CD4-positive, alpha-beta memory T cell (primary cell): ENCODE measurements at regions of chr3 and their contacts with region 1.

Region 1: DNA sequence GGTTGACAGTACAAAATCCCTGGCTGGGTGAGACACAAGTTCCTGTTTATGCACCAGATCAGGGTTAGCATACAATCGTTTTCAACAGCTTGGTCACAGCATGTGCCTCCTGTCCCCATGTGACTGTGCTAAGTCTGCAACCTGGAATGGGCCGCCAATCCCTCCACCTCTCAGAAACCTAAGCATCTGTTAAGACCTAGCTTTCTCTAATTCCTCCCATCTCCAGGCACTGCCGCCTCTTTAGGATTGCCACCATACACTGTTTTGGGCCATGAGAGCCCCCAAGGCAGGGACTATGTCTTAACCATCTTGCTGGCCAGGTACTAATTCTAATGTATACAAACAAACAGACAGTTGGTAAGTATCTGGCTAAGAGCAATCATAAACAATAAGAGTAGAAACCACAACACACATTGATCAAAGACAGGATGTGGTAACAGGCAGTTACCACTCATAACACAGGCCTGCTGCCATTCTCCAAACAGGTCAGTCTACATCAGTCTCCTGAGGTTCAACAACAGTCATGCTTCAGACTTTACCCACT is 25.6 kb downstream of the SEC22C start:
- DNase-seq: peak; percentile 78 to 86 (median 81)
- H3K4me3 ChIP-seq: peak overlapping the region; percentile 15 to 17
- H3K4me3 Mint-ChIP-seq: peak overlapping the region; percentile 46 to 88 (median 80)
- H3K27ac ChIP-seq: peak overlapping the region; percentile 41
- H3K27ac Mint-ChIP-seq: peak overlapping the region; percentile 91 to 99 (median 98)
- H3K4me1 ChIP-seq: peaks cover 44% of the 10 kb centered on the region
- H3K4me1 Mint-ChIP-seq: peaks cover 31 to 52% (median 43%) of the 10 kb centered on the region in 4 donors
- H3K27me3 ChIP-seq: no peaks in the 10 kb centered on the region
- H3K27me3 Mint-ChIP-seq: no peaks in the 10 kb centered on the region

Region 2: GRCh38 chr3:42052484-42053351 is 503.4 kb before region 1 on chr3:
- CTCF ChIA-PET with region 1: no interaction called
- POLR2A ChIA-PET with region 1: no interaction called
- intact Hi-C with region 1: no loop called
- DNase-seq: no peak
- H3K4me3 ChIP-seq: no peak overlapping the region
- H3K4me3 Mint-ChIP-seq: no peak overlapping the region
- H3K27ac ChIP-seq: no peak overlapping the region
- H3K27ac Mint-ChIP-seq: peak overlapping the region in 1 of 7 donors; percentile 15
- H3K4me1 ChIP-seq: peaks cover 12% of the 10 kb centered on the region
- H3K4me1 Mint-ChIP-seq: peaks cover 12 to 43% (median 28%) of the 10 kb centered on the region in 4 donors
- H3K27me3 ChIP-seq: no peaks in the 10 kb centered on the region
- H3K27me3 Mint-ChIP-seq: no peaks in the 10 kb centered on the region

Region 3: GRCh38 chr3:42118762-42119361 is 437.3 kb before region 1 on chr3:
- CTCF ChIA-PET with region 1: no interaction called
- POLR2A ChIA-PET with region 1: no interaction called
- intact Hi-C with region 1: loop called (anchors 5 kb)
- DNase-seq: no peak
- H3K4me3 ChIP-seq: no peak overlapping the region
- H3K4me3 Mint-ChIP-seq: no peak overlapping the region
- H3K27ac ChIP-seq: no peak overlapping the region
- H3K27ac Mint-ChIP-seq: peak overlapping the region in 3 of 7 donors; percentile 37 to 61 (median 43)
- H3K4me1 ChIP-seq: no peaks in the 10 kb centered on the region
- H3K4me1 Mint-ChIP-seq: peaks cover 13 to 17% (median 16%) of the 10 kb centered on the region in 4 donors
- H3K27me3 ChIP-seq: no peaks in the 10 kb centered on the region
- H3K27me3 Mint-ChIP-seq: no peaks in the 10 kb centered on the region

Region 4: DNA sequence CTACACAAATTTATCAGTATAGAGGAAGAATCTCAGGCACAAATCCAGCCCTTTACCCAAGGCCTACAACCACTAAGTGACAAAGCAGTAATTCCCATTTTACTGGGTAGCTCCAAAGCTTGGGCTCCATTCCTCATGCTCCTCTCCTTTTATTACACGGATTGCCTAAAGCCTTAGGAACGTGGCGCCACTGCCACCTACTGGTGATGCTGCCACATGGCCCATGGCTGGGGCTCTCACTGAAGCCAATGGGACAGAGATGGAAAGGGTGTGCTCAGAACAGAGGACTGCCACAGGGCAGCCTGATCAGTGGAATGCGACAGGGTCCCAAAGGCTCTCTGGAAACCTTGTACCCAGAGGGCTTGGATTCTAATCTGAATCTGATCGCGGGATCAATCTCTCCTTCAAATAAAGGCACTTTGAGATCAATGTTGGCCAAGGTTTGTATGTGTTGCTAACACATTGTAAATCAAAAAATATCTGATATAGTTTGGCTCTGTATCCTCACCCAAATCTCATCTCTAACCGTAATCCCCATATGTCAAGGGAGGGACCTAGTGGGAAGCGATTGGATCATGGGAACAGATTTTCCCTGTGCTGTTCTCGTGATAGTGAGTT is 112.2 kb before region 1 on chr3:
- CTCF ChIA-PET with region 1: interaction called, 6 read pairs
- POLR2A ChIA-PET with region 1: no interaction called
- intact Hi-C with region 1: loop called (anchors 2 kb)
- DNase-seq: peak; percentile 47 to 63 (median 59)
- H3K4me3 ChIP-seq: no peak overlapping the region
- H3K4me3 Mint-ChIP-seq: no peak overlapping the region
- H3K27ac ChIP-seq: no peak overlapping the region
- H3K27ac Mint-ChIP-seq: no peak overlapping the region
- H3K4me1 ChIP-seq: no peaks in the 10 kb centered on the region
- H3K4me1 Mint-ChIP-seq: no peaks in the 10 kb centered on the region
- H3K27me3 ChIP-seq: no peaks in the 10 kb centered on the region
- H3K27me3 Mint-ChIP-seq: peaks cover 4 to 18% of the 10 kb centered on the region in 2 donors

Region 5: GRCh38 chr3:42539869-42540714 is 16.1 kb before region 1 on chr3:
- CTCF ChIA-PET with region 1: interaction called, 1,823 read pairs
- POLR2A ChIA-PET with region 1: interaction called, 3 read pairs
- intact Hi-C with region 1: loop called (anchors 1 kb)
- DNase-seq: peak; percentile 47 to 64 (median 60)
- H3K4me3 ChIP-seq: no peak overlapping the region
- H3K4me3 Mint-ChIP-seq: no peak overlapping the region
- H3K27ac ChIP-seq: no peak overlapping the region
- H3K27ac Mint-ChIP-seq: peak overlapping the region in 5 of 7 donors; percentile 17 to 72 (median 52)
- H3K4me1 ChIP-seq: peaks cover 18% of the 10 kb centered on the region
- H3K4me1 Mint-ChIP-seq: peaks cover 13 to 32% (median 25%) of the 10 kb centered on the region in 4 donors
- H3K27me3 ChIP-seq: no peaks in the 10 kb centered on the region
- H3K27me3 Mint-ChIP-seq: no peaks in the 10 kb centered on the region

Region 6: DNA sequence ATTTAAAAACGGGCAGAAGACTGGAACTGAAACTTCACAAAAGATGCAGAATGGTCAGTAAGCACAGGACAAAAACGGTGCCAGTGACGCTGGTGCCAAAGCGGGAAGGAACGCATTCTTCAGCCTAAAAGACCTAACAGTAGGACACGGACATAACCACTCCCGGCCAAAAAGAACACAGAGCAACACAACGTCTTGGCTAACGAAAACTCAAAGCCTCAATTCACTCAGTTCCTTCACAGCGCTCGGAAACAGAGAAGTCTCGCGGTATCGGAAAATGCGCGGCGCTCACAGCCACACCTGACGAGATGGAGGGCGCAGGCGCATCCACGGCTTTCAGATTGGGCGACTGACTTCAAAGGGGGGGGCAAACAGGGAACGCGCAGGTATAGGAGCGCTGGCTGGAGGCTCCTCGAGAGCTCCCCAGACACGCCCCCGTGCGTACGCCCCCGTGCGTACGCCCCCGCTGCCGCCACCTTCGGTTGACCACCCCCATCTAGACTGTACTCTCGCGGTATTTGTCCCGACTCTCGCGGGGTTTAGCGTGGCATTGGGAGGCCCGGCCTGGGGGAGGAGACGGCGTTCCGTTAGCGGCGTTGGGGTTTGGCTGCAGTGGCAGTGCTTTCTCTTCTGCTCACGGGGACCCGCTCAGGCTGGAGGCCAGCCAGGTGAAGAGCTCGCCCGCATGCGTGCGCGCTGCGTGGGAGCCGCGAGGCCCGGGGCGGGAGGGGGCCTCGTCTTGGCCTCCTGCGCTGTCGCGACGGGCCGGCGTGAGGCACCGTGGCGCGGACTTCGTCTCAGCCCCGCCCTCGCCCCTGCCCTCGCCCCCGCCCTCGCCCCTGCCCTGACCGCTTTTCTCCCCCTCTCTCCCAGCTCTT is 44.2 kb after region 1 on chr3 and contains the start of gene NKTR:
- CTCF ChIA-PET with region 1: interaction called, 6 read pairs
- POLR2A ChIA-PET with region 1: interaction called, 18 read pairs
- intact Hi-C with region 1: no loop called
- DNase-seq: peak; percentile 99 to 100 (median 100)
- H3K4me3 ChIP-seq: peak within 1 kb of the TSS; percentile 76 to 88
- H3K4me3 Mint-ChIP-seq: peak within 1 kb of the TSS; percentile 91 to 97 (median 94)
- H3K27ac ChIP-seq: peak within 1 kb of the TSS; percentile 85
- H3K27ac Mint-ChIP-seq: peak within 1 kb of the TSS; percentile 94 to 99 (median 98)
- H3K4me1 ChIP-seq: peaks cover 39% of the 10 kb centered on the region
- H3K4me1 Mint-ChIP-seq: peaks cover 27 to 49% (median 36%) of the 10 kb centered on the region in 4 donors
- H3K27me3 ChIP-seq: no peaks in the 10 kb centered on the region
- H3K27me3 Mint-ChIP-seq: no peaks in the 10 kb centered on the region
- total RNA-seq, gene NKTR: 256 to 269 TPM